ENCODE measurements at regions of chr11 and their contacts with region 1.

Region 1: DNA sequence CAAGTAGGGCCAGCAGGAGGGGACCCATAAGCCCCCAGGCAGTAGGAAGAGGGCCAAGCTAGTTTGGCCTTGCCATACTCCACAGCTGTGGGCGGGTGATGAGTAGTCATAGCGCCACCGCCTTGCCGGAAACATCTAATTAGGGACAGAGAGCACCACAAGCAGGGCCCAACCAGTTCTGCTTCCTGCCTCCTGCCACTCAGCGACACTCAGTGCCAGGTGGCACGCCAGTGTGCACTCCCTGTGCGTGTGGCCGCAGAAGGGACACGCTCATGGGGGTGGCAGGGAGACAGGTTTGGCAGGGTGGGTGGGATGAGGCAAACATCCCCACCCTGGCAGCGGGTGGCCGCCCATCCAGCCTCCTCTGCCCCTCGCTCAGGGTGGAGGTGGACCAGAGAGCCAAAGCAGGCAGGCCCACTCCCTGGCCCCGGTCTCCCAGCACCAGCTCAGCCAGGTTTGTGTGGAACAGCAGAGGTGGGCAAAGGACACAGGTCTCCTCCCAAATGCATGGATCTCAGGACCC is 4.9 kb downstream of the OVOL1 start:
- DNase-seq: no peak
- H3K4me3 Mint-ChIP-seq: no peak overlapping the region
- H3K27ac Mint-ChIP-seq: no peak overlapping the region
- H3K4me1 Mint-ChIP-seq: peaks cover 8% of the 10 kb centered on the region
- H3K27me3 Mint-ChIP-seq: peaks cover 35% of the 10 kb centered on the region

Region 2: DNA sequence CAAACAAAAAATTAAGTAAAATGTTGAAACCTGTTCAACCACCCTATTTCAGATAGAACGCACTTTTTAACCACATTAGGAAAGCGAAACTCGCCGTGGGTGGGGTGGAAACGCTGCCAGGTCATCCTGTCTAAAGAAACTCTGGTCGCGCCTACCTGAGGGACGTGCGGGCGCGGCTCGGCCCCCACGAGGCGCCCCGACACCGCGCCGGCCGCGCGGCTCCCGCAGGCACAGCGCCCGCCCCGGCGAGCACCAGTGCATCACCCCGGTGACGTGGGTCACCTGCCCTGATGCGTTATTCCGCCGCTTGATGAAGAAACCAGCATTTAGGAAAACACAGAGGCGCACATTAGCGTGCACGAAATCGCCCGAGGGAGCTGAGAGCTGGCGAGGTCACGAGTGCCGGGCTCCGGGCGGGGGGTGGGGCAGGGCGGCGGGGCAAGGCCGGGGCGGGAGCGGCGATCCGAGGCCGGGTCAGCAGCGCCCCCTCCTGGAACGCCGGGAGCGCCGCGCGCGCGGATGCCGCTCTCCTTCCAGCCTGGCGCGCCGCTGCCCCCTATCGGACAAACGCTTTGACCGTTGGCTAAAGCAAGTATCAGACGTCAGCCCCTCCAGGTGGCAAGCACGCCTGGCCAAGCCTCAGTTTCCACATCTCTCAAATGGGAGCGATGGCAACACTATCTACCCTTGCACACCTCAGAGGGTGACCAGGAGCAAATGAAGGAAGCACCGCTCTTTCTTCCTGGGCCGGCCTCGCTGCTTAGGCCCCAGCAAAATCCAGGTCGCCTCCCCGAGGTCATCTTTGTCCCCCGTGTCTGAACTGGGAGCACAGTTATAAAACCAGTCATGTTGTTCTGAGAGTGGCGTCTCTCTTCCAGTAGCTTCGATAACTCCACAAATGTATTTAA is 26.3 kb after region 1 on chr11:
- CTCF ChIA-PET with region 1: interaction called, 15 read pairs
- POLR2A ChIA-PET with region 1: no interaction called
- DNase-seq: peak; percentile 93
- H3K4me3 Mint-ChIP-seq: peak overlapping the region; percentile 74
- H3K27ac Mint-ChIP-seq: peak overlapping the region; percentile 79
- H3K4me1 Mint-ChIP-seq: peaks cover 20% of the 10 kb centered on the region
- H3K27me3 Mint-ChIP-seq: peaks cover 4% of the 10 kb centered on the region

Measured in activated CD4-positive, alpha-beta T cell treated with anti-CD3 and anti-CD28 coated beads, Interleukin-2, amount 10 ng/mL, durations not matched to agents 7 days and 5 days (primary cell).